ENCODE measurements at regions of chr11 and their contacts with region 1.

Region 1: GRCh38 chr11:73184953-73185671 is 33.0 kb upstream of the P2RY2 start:
- DNase-seq: peak; percentile 74
- H3K4me3 Mint-ChIP-seq: no peak overlapping the region
- H3K27ac Mint-ChIP-seq: no peak overlapping the region
- H3K4me1 Mint-ChIP-seq: peaks cover 5% of the 10 kb centered on the region
- H3K27me3 Mint-ChIP-seq: peaks cover 7% of the 10 kb centered on the region

Region 2: DNA sequence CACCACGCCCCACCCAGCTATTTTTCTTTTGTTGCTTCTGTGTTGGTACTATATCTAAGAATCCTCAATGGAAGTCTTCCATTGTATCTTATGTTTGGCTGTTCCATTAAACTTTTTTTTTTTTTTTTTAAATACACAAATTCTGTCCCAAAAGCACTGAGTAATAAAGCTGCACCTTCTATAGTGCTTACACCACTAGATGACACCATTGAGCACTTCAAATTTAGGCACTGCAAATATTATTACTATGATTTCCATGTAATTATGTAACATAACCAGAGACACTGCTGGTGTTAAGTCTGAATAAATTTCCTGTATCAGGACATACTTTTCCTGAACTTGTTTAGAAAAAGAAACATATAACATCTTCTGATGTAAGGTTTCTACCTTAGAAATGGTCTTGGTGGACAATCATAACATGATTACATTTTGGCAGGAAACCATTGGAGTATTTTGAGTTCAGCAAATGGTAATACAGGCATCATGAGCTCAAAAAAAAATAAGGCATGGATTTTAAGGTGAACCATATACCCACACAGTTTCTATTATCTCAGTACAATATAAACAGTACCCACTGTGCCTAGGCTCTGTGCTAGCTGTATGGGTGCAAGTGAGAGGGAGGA is 260.4 kb before region 1 on chr11:
- CTCF ChIA-PET with region 1: interaction called, 96 read pairs
- POLR2A ChIA-PET with region 1: no interaction called
- intact Hi-C with region 1: no loop called
- DNase-seq: no peak
- H3K4me3 Mint-ChIP-seq: no peak overlapping the region
- H3K27ac Mint-ChIP-seq: peak overlapping the region; percentile 49
- H3K4me1 Mint-ChIP-seq: peaks cover 2% of the 10 kb centered on the region
- H3K27me3 Mint-ChIP-seq: no peaks in the 10 kb centered on the region

Region 3: DNA sequence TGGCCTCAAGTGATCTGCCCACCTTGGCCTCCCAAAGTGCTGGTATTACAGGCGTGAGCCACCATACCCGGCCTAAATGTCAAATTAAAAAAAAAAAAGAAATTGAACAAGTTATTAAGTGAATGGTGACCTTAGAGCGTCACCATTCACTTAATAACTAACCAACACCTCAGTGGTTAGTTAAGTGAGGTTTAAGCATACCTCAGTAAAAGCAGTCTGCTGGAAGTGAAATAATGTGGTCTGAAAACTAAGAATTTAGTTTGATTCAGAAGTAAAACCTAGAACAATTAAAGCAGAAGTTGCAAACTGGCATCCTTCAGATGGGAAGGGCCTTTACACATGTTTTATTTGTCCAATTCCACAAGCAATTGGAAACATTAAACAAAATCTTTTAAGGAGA is 114.5 kb before region 1 on chr11:
- CTCF ChIA-PET with region 1: no interaction called
- POLR2A ChIA-PET with region 1: no interaction called
- intact Hi-C with region 1: no loop called
- DNase-seq: no peak
- H3K4me3 Mint-ChIP-seq: no peak overlapping the region
- H3K27ac Mint-ChIP-seq: no peak overlapping the region
- H3K4me1 Mint-ChIP-seq: peaks cover 43% of the 10 kb centered on the region
- H3K27me3 Mint-ChIP-seq: no peaks in the 10 kb centered on the region

Region 4: DNA sequence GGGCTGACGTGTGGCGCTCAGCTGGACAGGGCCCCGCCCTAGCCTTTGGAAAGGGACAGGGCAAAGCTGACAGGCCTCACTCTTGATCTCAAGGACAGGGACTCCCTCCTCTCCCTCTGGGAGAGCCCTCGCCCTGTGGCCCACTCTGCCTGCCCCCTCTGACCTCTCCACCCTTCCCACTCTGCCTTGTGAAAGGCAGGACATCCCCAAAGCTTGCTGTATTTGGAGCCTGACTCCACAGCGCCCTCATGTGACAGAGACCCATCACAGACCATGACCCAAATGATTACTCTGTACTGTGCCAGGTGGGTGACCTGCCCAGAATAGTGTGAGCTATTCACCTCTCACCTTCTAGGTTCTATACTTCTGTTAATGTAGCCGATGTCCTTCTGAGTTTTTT is 51.7 kb after region 1 on chr11:
- CTCF ChIA-PET with region 1: interaction called, 19 read pairs
- POLR2A ChIA-PET with region 1: no interaction called
- intact Hi-C with region 1: loop called (anchors 1 kb)
- DNase-seq: peak; percentile 59
- H3K4me3 Mint-ChIP-seq: no peak overlapping the region
- H3K27ac Mint-ChIP-seq: no peak overlapping the region
- H3K4me1 Mint-ChIP-seq: no peaks in the 10 kb centered on the region
- H3K27me3 Mint-ChIP-seq: peaks cover 3% of the 10 kb centered on the region

Region 5: DNA sequence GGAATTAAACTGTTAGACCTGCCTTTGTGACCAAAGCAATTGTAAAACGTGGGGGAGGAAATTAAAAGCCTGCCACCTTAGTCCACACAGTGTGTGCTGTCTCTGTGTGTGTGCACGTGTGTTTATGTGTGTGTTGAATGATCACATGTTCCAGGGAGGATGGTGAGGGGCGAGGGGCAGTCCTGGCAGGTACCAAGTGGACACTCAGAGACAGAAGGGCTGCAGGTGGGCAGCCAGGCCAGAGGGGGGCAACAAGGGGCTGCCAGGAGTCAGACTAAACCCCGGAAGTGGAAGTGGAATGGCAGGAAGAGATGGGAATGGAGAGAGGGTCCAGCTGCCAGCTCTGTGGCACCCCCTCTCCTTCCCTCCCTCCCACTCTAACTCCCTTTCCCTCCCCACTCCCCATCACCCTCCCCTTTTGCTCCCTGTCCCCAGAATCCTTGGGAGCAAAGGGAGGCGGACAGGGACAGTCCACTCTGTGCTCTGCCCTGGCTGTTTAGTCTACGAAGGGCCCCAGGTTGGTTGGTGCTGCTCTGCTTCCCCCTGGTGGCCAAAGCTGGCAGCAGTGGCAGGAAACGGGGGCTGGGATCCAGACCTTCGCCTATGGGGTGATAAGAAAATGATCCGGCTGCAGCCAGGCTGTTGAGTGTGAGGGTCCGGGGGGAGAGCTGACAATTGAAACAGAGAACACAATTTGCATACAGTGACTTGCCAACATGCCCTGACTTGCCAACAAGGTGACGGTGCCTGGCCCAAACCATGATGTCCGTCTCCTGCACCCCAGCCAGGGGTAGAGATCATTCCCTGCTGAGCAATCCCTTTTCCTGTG is 57.4 kb after region 1 on chr11:
- CTCF ChIA-PET with region 1: interaction called, 19 read pairs
- POLR2A ChIA-PET with region 1: no interaction called
- intact Hi-C with region 1: loop called (anchors 1 kb)
- DNase-seq: peak; percentile 80
- H3K4me3 Mint-ChIP-seq: peak overlapping the region; percentile 14
- H3K27ac Mint-ChIP-seq: no peak overlapping the region
- H3K4me1 Mint-ChIP-seq: no peaks in the 10 kb centered on the region
- H3K27me3 Mint-ChIP-seq: peaks cover 6% of the 10 kb centered on the region

Region 6: DNA sequence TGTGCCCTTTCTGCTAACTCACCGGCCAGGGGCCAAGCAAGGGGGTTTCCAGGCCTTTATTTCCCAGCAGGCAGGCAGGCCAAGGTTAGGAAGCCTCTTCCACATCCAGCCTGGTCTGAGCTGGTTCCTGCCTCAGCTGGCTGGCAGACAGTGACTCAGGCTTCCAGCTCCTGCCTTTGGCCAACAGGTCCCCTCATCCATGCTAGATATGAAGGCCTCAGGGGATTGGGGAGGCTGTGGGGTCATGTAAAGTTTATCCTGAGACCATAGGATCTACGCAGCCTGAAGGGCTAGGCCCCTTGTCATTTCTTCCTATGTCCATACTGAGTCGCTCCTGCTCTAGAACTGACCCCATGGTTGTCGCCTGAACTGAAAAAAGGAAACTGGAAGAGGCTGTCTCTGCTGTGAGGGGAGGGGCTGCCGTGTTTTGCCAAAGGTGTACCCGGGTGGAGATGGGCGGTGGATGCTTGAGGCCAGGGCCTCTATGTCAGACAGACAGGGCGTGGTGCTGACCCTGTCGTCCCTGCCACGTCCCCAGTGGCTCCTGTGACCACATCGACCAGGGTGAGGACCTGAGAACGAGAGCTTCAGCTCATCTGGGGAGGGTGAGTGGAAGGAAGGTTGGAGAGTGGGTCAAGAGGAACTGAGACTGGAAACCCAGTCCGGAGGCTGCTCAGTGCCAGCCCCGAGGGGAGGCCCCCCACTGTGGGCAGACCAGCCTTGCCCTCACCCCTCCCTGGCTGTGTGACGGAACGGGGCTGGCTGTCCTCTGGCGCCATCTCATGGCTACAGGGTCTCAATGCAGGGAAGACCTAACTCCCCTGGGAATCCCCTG is 104.0 kb after region 1 on chr11:
- CTCF ChIA-PET with region 1: interaction called, 17 read pairs
- POLR2A ChIA-PET with region 1: no interaction called
- intact Hi-C with region 1: loop called (anchors 2 kb)
- DNase-seq: peak; percentile 67
- H3K4me3 Mint-ChIP-seq: no peak overlapping the region
- H3K27ac Mint-ChIP-seq: no peak overlapping the region
- H3K4me1 Mint-ChIP-seq: peaks cover 6% of the 10 kb centered on the region
- H3K27me3 Mint-ChIP-seq: no peaks in the 10 kb centered on the region

Region 7: GRCh38 chr11:73445980-73446379 is 260.9 kb after region 1 on chr11:
- CTCF ChIA-PET with region 1: no interaction called
- POLR2A ChIA-PET with region 1: no interaction called
- intact Hi-C with region 1: no loop called
- DNase-seq: no peak
- H3K4me3 Mint-ChIP-seq: no peak overlapping the region
- H3K27ac Mint-ChIP-seq: no peak overlapping the region
- H3K4me1 Mint-ChIP-seq: peaks cover 6% of the 10 kb centered on the region
- H3K27me3 Mint-ChIP-seq: no peaks in the 10 kb centered on the region

Measured in activated CD4-positive, alpha-beta memory T cell treated with anti-CD3 and anti-CD28 coated beads for 36 hours (primary cell).